GM12878 (cell line): ENCODE measurements at regions of chr4 and their contacts with region 1.

Region 1: GRCh38 chr4:15882675-15883086 is 55.9 kb downstream of the FGFBP1 start:
- DNase-seq: peak; percentile 64
- ATAC-seq: peak; percentile 97
- H3K4me3 ChIP-seq: no peak overlapping the region
- H3K27ac ChIP-seq: no peak overlapping the region
- H3K4me1 ChIP-seq: no peaks in the 10 kb centered on the region
- H3K27me3 ChIP-seq: no peaks in the 10 kb centered on the region
- CTCF ChIP-seq: peak; percentile 88 to 91 (median 89)
- EP300 ChIP-seq: no peak
- POLR2A ChIP-seq: no peak
- RAD21 ChIP-seq: peak; percentile 81

Region 2: GRCh38 chr4:15479089-15479912 is 403.4 kb before region 1 on chr4:
- CTCF ChIA-PET with region 1: interaction called, 10 read pairs
- POLR2A ChIA-PET with region 1: no interaction called
- RAD21 ChIA-PET with region 1: no interaction called
- SMC1A ChIA-PET with region 1: interaction called, 5 read pairs
- in situ Hi-C with region 1: no loop called
- intact Hi-C with region 1: loop called (anchors 2 kb)
- DNase-seq: no peak
- ATAC-seq: peak; percentile 84
- H3K4me3 ChIP-seq: no peak overlapping the region
- H3K27ac ChIP-seq: no peak overlapping the region
- H3K4me1 ChIP-seq: no peaks in the 10 kb centered on the region
- H3K27me3 ChIP-seq: no peaks in the 10 kb centered on the region
- CTCF ChIP-seq: peak; percentile 51 to 74 (median 57); a peak in 5 of 6 replicates
- EP300 ChIP-seq: no peak
- POLR2A ChIP-seq: no peak
- RAD21 ChIP-seq: peak; percentile 79

Region 3: DNA sequence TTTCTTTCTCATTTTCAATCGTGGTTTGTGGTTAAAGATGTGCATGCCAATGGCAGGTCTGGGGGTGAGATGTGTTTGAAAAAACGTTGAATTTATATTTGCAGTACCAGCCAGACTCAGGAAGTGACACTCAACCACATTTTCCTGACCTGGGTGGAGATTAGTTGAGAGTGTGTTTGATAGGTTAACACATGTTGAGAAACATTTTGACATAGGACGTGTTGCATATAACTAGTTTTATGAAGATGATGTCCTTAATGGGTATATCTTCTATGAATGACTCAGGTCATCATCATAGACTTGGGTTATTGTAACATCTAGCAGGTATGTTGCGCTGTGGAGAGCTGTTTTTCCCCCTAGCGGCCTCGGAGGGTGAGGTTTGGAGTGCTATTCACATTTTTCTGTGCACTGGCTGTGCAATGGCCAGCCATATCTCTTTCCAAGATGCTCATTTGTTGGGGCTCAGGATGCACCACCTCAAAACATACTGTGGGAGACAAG is 126.3 kb before region 1 on chr4:
- CTCF ChIA-PET with region 1: interaction called, 8 read pairs
- POLR2A ChIA-PET with region 1: no interaction called
- RAD21 ChIA-PET with region 1: interaction called, 4 read pairs
- SMC1A ChIA-PET with region 1: interaction called, 11 read pairs
- in situ Hi-C with region 1: no loop called
- intact Hi-C with region 1: no loop called
- DNase-seq: peak; percentile 66
- ATAC-seq: peak; percentile 95
- H3K4me3 ChIP-seq: 0 out of 2 replicates have a peak overlapping the region, but pooled peaks have one; percentile 18
- H3K27ac ChIP-seq: no peak overlapping the region
- H3K4me1 ChIP-seq: peaks cover 18% of the 10 kb centered on the region
- H3K27me3 ChIP-seq: no peaks in the 10 kb centered on the region
- CTCF ChIP-seq: peak; percentile 35 to 67 (median 58); a peak in 5 of 6 replicates
- EP300 ChIP-seq: no peak
- POLR2A ChIP-seq: no peak
- RAD21 ChIP-seq: 0 out of 2 replicates have a peak, but pooled peaks have one; percentile 9

Region 4: GRCh38 chr4:15805583-15806517 is 76.8 kb before region 1 on chr4:
- CTCF ChIA-PET with region 1: interaction called, 188 read pairs
- POLR2A ChIA-PET with region 1: interaction called, 4 read pairs
- RAD21 ChIA-PET with region 1: interaction called, 117 read pairs
- SMC1A ChIA-PET with region 1: interaction called, 152 read pairs
- in situ Hi-C with region 1: loop called (anchors 5 kb)
- intact Hi-C with region 1: loop called (anchors 1 kb)
- DNase-seq: peak; percentile 48
- ATAC-seq: peak; percentile 76
- H3K4me3 ChIP-seq: no peak overlapping the region
- H3K27ac ChIP-seq: no peak overlapping the region
- H3K4me1 ChIP-seq: peaks cover 12% of the 10 kb centered on the region; the same call in 1 of the 2 replicates
- H3K27me3 ChIP-seq: no peaks in the 10 kb centered on the region
- CTCF ChIP-seq: peak; percentile 60 to 75 (median 69)
- EP300 ChIP-seq: peak in 1 of 2 experiments; percentile 40; a peak in 1 of 4 replicates
- POLR2A ChIP-seq: no peak
- RAD21 ChIP-seq: peak; percentile 84

Region 5: DNA sequence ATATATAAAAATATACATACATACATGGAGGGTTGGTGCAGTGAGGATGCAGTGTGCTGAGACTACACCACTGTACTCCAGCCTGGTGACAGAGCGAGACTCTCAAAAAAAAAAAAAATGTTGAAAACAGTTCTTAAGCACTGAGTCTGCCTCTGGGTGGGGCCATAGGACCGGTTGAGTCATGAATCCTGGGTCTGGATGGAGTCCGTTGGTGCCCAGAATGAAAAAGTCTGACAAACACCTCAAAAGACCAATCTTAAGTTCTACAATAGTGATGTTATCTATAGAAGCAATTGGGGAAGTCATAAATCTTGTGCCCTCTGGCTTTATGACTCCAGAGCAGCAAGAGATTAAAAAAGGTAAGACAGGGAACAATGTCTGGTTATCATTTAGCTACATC is 14.6 kb before region 1 on chr4:
- CTCF ChIA-PET with region 1: interaction called, 14 read pairs
- POLR2A ChIA-PET with region 1: no interaction called
- RAD21 ChIA-PET with region 1: interaction called, 3 read pairs
- SMC1A ChIA-PET with region 1: interaction called, 12 read pairs
- in situ Hi-C with region 1: no loop called
- intact Hi-C with region 1: no loop called
- DNase-seq: no peak
- ATAC-seq: peak; percentile 39
- H3K4me3 ChIP-seq: no peak overlapping the region
- H3K27ac ChIP-seq: no peak overlapping the region
- H3K4me1 ChIP-seq: no peaks in the 10 kb centered on the region
- H3K27me3 ChIP-seq: no peaks in the 10 kb centered on the region
- CTCF ChIP-seq: no peak
- EP300 ChIP-seq: no peak
- POLR2A ChIP-seq: no peak
- RAD21 ChIP-seq: no peak

Region 6: GRCh38 chr4:15938182-15938581 is 55.5 kb after region 1 on chr4:
- CTCF ChIA-PET with region 1: interaction called, 6 read pairs
- POLR2A ChIA-PET with region 1: no interaction called
- RAD21 ChIA-PET with region 1: interaction called, 7 read pairs
- SMC1A ChIA-PET with region 1: interaction called, 14 read pairs
- in situ Hi-C with region 1: no loop called
- intact Hi-C with region 1: no loop called
- DNase-seq: no peak
- ATAC-seq: no peak
- H3K4me3 ChIP-seq: no peak overlapping the region
- H3K27ac ChIP-seq: no peak overlapping the region
- H3K4me1 ChIP-seq: no peaks in the 10 kb centered on the region
- H3K27me3 ChIP-seq: no peaks in the 10 kb centered on the region; a peak in 1 of 4 replicates
- CTCF ChIP-seq: no peak
- EP300 ChIP-seq: no peak
- POLR2A ChIP-seq: no peak
- RAD21 ChIP-seq: no peak

Region 7: GRCh38 chr4:16264798-16265197 is 382.1 kb after region 1 on chr4:
- CTCF ChIA-PET with region 1: interaction called, 17 read pairs
- POLR2A ChIA-PET with region 1: no interaction called
- RAD21 ChIA-PET with region 1: interaction called, 11 read pairs
- SMC1A ChIA-PET with region 1: interaction called, 14 read pairs
- in situ Hi-C with region 1: no loop called
- intact Hi-C with region 1: no loop called
- DNase-seq: peak; percentile 5
- ATAC-seq: peak; percentile 85
- H3K4me3 ChIP-seq: no peak overlapping the region
- H3K27ac ChIP-seq: no peak overlapping the region
- H3K4me1 ChIP-seq: no peaks in the 10 kb centered on the region
- H3K27me3 ChIP-seq: no peaks in the 10 kb centered on the region
- CTCF ChIP-seq: peak; percentile 40 to 62 (median 46); a peak in 5 of 6 replicates
- EP300 ChIP-seq: no peak
- POLR2A ChIP-seq: no peak
- RAD21 ChIP-seq: peak; percentile 70